PC-9 (cell line): ENCODE measurements at regions of chr2 and their contacts with region 1.

Region 1: DNA sequence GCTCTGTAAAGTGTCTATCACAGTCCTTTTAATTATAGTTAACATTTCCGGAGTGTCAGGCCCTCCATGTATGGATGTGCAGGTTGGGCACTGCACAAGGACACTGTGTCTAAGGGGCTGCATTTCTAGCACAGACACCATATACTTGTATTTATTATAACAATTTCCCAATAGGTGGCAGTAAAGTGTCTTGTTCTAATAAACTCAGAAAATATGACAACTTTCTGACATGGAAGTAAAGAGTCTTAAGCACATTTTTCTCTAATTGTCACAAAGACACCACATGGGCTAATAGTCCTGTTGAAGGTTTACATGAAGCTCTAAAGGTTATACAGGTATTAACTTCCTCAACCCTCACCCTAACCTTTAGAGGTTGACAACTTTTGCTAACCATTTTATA is 156.6 kb downstream of the DYSF start:
- DNase-seq: peak in 1 of 2 experiments; percentile 52
- H3K4me3 ChIP-seq: no peak overlapping the region
- H3K27ac ChIP-seq: no peak overlapping the region
- H3K4me1 ChIP-seq: peaks cover 14% of the 10 kb centered on the region
- H3K27me3 ChIP-seq: no peaks in the 10 kb centered on the region
- CTCF ChIP-seq: peak; percentile 63

Region 2: DNA sequence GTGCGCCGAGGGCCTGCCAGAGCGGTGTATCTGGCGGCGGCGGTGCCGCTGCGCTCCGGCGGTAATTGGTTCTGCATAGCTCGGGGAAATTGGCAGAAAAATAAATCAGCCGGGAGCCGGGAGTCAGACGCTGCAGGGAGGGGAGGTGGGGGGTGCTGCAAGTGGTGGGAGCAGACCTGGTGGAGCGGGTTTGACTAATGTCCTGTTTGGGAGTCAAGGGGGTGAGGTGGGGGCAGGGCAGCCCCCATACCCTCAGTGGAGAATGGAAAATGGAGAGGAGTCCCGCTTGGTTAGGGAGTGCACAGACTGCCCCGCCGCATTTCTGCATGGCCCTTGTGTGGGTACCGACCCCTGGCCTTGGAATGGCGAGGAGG is 49.3 kb before region 1 on chr2:
- CTCF ChIA-PET with region 1: no interaction called
- POLR2A ChIA-PET with region 1: no interaction called
- intact Hi-C with region 1: loop called (anchors 5 kb)
- DNase-seq: no peak
- H3K4me3 ChIP-seq: no peak overlapping the region
- H3K27ac ChIP-seq: no peak overlapping the region
- H3K4me1 ChIP-seq: peaks cover 9% of the 10 kb centered on the region; the same call in 1 of the 2 replicates
- H3K27me3 ChIP-seq: no peaks in the 10 kb centered on the region
- CTCF ChIP-seq: no peak

Region 3: GRCh38 chr2:71861186-71862160 is 251.5 kb after region 1 on chr2:
- CTCF ChIA-PET with region 1: no interaction called
- POLR2A ChIA-PET with region 1: no interaction called
- intact Hi-C with region 1: loop called (anchors 10 kb)
- DNase-seq: peak in 1 of 2 experiments; percentile 31
- H3K4me3 ChIP-seq: no peak overlapping the region
- H3K27ac ChIP-seq: no peak overlapping the region
- H3K4me1 ChIP-seq: peaks cover 9% of the 10 kb centered on the region
- H3K27me3 ChIP-seq: peaks cover 22% of the 10 kb centered on the region; the same call in 1 of the 2 replicates
- CTCF ChIP-seq: no peak

Region 4: GRCh38 chr2:71934595-71935261 is 324.8 kb after region 1 on chr2:
- CTCF ChIA-PET with region 1: no interaction called
- POLR2A ChIA-PET with region 1: no interaction called
- intact Hi-C with region 1: no loop called
- DNase-seq: no peak
- H3K4me3 ChIP-seq: no peak overlapping the region
- H3K27ac ChIP-seq: no peak overlapping the region
- H3K4me1 ChIP-seq: peaks cover 20% of the 10 kb centered on the region
- H3K27me3 ChIP-seq: no peaks in the 10 kb centered on the region
- CTCF ChIP-seq: no peak